Activated CD4-positive, alpha-beta T cell treated with anti-CD3 and anti-CD28 coated beads for 36 hours (primary cell): ENCODE measurements at regions of chr6 and their contacts with region 1.

Region 1: DNA sequence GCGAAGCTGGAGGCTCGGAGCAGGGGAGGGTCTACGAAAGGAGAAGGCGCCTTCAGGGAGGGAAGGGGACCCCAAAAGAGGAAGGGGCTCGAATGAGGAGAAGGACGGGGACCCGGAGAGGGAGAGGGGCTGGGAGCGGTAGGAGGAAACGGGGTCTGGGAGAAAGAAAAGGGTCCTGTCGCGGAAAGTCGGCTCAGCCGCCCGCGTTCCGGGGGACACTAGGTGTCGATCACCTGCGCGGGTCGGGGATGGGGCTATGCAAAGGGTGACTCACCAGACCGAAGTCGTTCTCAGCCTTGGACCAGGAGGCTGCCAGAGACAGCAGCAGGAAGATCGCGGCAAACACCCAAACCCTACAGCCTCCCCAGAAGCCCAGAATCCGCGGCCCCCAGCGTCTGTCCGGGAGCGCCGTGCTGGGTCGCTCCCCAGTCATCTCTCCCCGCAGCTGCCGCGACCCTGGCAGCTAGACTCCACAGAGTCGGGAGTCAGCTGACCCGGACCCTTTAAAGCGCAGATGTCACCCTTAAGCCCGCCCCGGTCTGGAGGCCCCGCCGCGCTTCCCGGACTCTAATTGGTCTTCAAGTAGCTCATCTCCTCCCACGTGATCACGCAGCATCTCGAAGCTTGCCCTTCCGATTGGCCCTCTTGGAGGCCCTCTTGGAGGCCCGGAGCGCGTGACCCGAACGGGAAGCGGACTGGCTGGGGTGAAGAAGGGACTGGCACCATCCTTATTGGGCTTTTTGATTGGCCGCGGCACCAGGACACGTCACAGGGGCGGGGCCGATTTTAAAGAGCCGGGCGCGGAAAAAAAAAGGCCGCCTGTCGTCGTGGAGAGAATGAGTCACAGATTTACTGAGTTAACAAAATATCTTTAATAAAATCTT is at the start of gene NEU1:
- DNase-seq: peak; percentile 100
- ATAC-seq: peak; percentile 98
- H3K4me3 Mint-ChIP-seq: peak within 1 kb of the TSS; percentile 90
- H3K27ac Mint-ChIP-seq: peak within 1 kb of the TSS; percentile 91
- H3K4me1 Mint-ChIP-seq: peaks cover 27% of the 10 kb centered on the region
- H3K27me3 Mint-ChIP-seq: no peaks in the 10 kb centered on the region
- total RNA-seq, gene NEU1: 11.6 to 11.8 TPM

Region 2: DNA sequence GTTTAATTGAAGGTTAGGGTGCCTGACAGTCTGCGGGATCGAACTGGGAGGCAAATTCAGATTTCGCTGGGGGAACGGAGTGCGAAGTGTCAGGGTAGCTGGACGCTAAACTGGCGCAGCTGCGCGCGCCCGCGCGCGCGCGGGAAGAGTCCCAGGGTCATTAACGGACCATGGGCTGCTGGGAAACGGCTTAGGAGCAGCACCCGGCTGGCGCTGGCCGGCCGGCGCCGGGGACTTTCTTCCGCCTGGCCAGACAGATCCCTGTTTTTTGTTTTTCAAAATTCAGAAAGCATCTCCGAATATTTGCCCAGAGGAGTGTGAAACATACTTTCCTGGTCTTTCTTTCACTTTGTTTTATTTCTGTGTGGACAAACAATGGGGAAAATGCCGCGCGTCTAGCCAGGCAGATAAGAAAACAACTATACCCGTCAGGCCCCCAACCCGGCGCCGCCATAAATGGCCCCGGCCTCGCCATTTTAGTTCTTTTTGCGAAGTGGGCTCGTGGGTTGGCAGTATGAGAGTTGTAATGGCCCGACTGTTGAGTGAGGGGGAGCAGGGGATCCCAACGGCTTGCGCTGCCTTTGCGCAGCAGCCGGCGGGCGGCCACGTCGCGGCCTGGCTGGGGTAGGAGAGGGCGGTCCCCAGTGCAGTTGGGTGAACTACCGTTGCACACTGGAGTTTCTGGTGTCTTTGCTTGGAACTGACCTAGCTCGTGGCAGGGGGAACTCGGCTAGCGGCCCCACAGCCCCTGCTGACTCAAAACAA is 28.0 kb before region 1 on chr6:
- CTCF ChIA-PET with region 1: interaction called, 4 read pairs
- POLR2A ChIA-PET with region 1: interaction called, 5 read pairs
- intact Hi-C with region 1: loop called (anchors 1 to 2 kb)
- DNase-seq: peak; percentile 85
- ATAC-seq: peak; percentile 63
- H3K4me3 Mint-ChIP-seq: peak overlapping the region; percentile 90
- H3K27ac Mint-ChIP-seq: peak overlapping the region; percentile 95
- H3K4me1 Mint-ChIP-seq: peaks cover 40% of the 10 kb centered on the region
- H3K27me3 Mint-ChIP-seq: no peaks in the 10 kb centered on the region

Region 3: DNA sequence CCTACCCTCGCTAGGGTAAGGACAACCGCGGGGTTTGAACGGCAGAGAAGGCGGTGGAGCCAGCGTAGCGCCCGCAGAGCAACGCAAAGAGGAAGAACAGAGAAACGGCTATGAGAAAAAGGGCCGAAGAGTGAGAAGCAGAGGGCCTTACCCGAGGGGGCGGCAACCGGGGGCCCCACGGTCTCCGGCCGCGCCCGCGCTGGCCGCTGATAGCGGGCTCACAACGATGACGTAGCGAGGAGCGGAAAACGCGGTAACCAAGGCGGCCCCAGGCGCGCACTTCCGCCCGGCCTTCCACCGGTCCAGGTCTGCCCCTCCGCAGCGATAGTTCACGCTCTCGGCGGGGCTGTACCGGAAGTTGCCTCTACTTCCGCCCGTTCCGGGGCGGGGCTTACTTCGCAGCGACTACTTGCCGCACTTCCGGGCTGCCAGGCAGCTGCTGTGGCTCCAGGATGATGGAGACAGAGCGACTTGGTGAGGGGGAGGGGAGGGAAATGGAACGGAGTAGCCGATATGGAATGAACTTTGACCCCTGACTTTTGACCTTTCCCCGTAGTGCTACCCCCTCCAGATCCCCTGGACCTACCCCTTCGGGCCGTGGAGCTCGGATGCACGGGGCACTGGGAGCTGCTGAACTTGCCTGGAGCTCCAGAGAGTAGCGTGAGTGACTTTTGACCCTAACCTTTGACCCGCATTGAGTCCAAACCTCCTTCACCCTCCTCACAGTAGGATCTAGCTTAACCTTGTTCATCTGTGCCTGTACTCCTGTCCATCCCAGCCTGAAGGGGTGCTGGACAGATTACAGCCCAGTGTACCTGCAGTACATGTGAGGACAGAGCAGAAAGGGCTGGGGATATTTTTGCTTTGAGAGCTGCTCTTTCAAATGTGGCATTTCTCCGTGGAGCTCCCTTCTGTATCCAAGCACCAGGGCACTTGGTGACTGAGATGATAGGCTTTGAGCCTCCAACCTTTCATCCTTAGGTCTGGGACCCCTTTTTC is 96.5 kb after region 1 on chr6 and contains the starts of genes NELFE and SKIC2:
- CTCF ChIA-PET with region 1: no interaction called
- POLR2A ChIA-PET with region 1: no interaction called
- intact Hi-C with region 1: loop called in 1 of 2 experiments (anchors 1 kb)
- DNase-seq: peak; percentile 99
- ATAC-seq: peak; percentile 99
- H3K4me3 Mint-ChIP-seq: peak within 1 kb of the TSS; percentile 95
- H3K27ac Mint-ChIP-seq: peak within 1 kb of the TSS; percentile 98
- H3K4me1 Mint-ChIP-seq: peaks cover 34% of the 10 kb centered on the region
- H3K27me3 Mint-ChIP-seq: no peaks in the 10 kb centered on the region
- total RNA-seq, gene NELFE: 74.3 to 95.1 TPM
- total RNA-seq, gene SKIC2: 90.2 to 104 TPM

Region 4: DNA sequence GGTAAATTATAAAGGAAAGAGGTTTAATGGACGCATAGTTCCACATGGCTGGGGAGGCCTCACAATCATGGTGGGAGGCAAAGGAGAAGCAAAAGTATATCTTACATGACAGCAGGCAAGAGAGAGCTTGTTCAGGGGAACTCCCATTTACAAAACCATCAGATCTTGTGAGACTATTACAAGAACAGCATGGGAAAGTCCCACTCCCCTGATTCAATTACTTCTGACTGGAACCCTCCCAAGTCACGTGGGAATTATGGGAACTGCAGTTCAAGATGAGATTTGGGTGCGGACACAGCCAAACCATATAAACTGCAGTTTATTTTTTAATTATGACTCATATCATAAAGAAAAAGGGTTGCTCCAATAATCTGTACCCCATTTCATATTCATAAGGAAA is 856.3 kb after region 1 on chr6:
- CTCF ChIA-PET with region 1: no interaction called
- POLR2A ChIA-PET with region 1: no interaction called
- intact Hi-C with region 1: no loop called
- DNase-seq: no peak
- ATAC-seq: no peak
- H3K4me3 Mint-ChIP-seq: no peak overlapping the region
- H3K27ac Mint-ChIP-seq: no peak overlapping the region
- H3K4me1 Mint-ChIP-seq: no peaks in the 10 kb centered on the region
- H3K27me3 Mint-ChIP-seq: peaks cover 24% of the 10 kb centered on the region